Activated CD8-positive, alpha-beta T cell treated with anti-CD3 and anti-CD28 coated beads for 36 hours (primary cell): ENCODE measurements at regions of chr15 and their contacts with region 1.

Region 1: GRCh38 chr15:74768771-74769342 is 13.0 kb upstream of the CSK start:
- DNase-seq: peak; percentile 74
- ATAC-seq: peak; percentile 59
- H3K4me3 Mint-ChIP-seq: peak overlapping the region; percentile 19
- H3K27ac Mint-ChIP-seq: peak overlapping the region; percentile 44
- H3K4me1 Mint-ChIP-seq: peaks cover 24% of the 10 kb centered on the region
- H3K27me3 Mint-ChIP-seq: peaks cover 2% of the 10 kb centered on the region
- CTCF ChIP-seq: peak; percentile 85

Region 2: GRCh38 chr15:74373731-74374647 is 394.9 kb before region 1 on chr15:
- CTCF ChIA-PET with region 1: interaction called, 10 read pairs
- POLR2A ChIA-PET with region 1: interaction called, 4 read pairs
- intact Hi-C with region 1: no loop called
- DNase-seq: peak; percentile 97
- ATAC-seq: peak; percentile 90
- H3K4me3 Mint-ChIP-seq: peak overlapping the region; percentile 74
- H3K27ac Mint-ChIP-seq: peak overlapping the region; percentile 63
- H3K4me1 Mint-ChIP-seq: peaks cover 39% of the 10 kb centered on the region
- H3K27me3 Mint-ChIP-seq: peaks cover 6% of the 10 kb centered on the region
- CTCF ChIP-seq: peak; percentile 92

Region 3: DNA sequence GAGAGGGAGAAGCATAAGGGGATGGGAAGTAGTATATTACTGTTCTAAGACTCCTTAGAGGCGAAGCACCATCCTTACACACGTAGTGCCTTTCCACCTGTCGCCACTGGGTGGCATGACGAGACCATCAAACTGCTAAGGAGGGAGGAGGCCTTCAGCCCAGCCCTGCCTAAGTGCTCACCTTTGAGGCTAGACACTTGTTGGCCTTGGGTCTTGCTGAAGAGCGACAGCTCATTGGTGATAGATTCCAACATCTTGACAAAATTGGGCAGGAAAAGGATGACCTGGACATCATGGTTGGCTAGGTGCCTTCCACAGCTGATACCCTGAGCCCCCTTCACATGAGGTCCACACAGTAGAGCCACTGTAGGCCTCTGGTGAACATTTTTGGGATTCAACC is 133.6 kb before region 1 on chr15:
- CTCF ChIA-PET with region 1: interaction called, 576 read pairs
- POLR2A ChIA-PET with region 1: interaction called, 9 read pairs
- intact Hi-C with region 1: loop called (anchors 1 kb)
- DNase-seq: peak; percentile 84
- ATAC-seq: peak; percentile 94
- H3K4me3 Mint-ChIP-seq: no peak overlapping the region
- H3K27ac Mint-ChIP-seq: peak overlapping the region; percentile 39
- H3K4me1 Mint-ChIP-seq: no peaks in the 10 kb centered on the region
- H3K27me3 Mint-ChIP-seq: no peaks in the 10 kb centered on the region
- CTCF ChIP-seq: peak; percentile 89

Region 4: GRCh38 chr15:74682954-74683353 is 85.9 kb before region 1 on chr15:
- CTCF ChIA-PET with region 1: interaction called, 12 read pairs
- POLR2A ChIA-PET with region 1: no interaction called
- intact Hi-C with region 1: no loop called
- DNase-seq: no peak
- ATAC-seq: no peak
- H3K4me3 Mint-ChIP-seq: no peak overlapping the region
- H3K27ac Mint-ChIP-seq: no peak overlapping the region
- H3K4me1 Mint-ChIP-seq: peaks cover 4% of the 10 kb centered on the region
- H3K27me3 Mint-ChIP-seq: no peaks in the 10 kb centered on the region
- CTCF ChIP-seq: no peak

Region 5: DNA sequence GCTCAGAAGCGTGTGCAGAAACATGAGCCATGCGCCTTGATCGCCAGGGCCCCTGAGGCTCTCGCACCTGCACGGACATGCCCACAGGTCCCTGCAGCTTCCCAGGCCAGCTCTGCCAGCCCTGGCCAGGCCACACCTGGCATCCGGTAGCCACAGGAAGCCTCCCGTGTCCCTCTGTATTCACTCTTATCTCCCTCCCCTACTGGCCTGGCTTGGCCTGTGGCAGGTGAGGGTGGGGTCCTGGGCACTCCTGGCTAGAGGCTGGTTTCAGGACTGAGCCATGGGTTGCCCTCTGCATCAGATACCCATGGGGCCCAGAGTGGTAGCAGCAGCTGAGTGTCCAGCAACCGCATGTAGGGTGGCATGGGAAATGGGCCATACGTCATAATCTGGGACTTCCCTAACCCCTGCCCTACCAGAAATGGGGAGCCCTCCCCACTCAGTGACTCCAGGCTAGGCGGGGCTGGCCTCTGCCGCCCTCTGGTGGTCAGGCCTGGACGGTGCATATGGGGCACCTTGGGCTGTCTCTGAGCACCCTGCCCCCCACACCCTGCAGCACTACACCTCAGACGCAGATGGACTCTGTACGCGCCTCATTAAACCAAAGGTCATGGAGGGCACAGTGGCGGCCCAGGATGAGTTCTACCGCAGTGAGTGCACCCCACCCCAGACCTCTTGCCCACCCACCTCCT is 31.1 kb after region 1 on chr15:
- CTCF ChIA-PET with region 1: interaction called, 1,327 read pairs
- POLR2A ChIA-PET with region 1: interaction called, 410 read pairs
- intact Hi-C with region 1: loop called (anchors 2 kb)
- DNase-seq: peak; percentile 91
- ATAC-seq: peak; percentile 91
- H3K4me3 Mint-ChIP-seq: no peak overlapping the region
- H3K27ac Mint-ChIP-seq: peak overlapping the region; percentile 90
- H3K4me1 Mint-ChIP-seq: peaks cover 46% of the 10 kb centered on the region
- H3K27me3 Mint-ChIP-seq: no peaks in the 10 kb centered on the region
- CTCF ChIP-seq: peak; percentile 98

Region 6: DNA sequence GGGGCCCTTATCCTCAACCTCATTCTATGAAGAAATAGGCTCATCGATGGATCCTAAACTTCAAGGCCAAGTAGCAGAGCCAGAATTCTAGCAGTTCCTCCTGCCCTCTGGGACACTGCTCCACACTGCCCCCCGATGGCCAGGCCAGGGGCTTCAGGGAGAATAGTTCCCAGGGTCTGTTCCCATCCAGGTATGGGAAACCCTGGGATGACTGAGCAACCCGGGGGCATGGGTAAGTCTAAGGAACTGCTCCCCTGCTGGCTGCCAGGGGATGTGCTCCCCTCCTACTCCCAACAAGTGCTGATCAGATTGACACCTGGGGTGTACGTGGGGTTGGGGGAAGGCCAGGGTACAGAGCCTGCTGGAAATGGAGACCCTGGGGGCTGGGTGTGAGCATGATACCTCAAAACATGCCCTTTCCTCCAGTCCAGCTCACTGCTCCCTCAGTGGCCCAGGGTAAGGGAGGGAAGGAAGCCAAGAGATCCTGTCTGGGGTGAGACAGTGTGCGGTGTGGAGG is 66.5 kb after region 1 on chr15:
- CTCF ChIA-PET with region 1: interaction called, 16 read pairs
- POLR2A ChIA-PET with region 1: interaction called, 3 read pairs
- intact Hi-C with region 1: no loop called
- DNase-seq: peak; percentile 59
- ATAC-seq: peak; percentile 63
- H3K4me3 Mint-ChIP-seq: no peak overlapping the region
- H3K27ac Mint-ChIP-seq: no peak overlapping the region
- H3K4me1 Mint-ChIP-seq: no peaks in the 10 kb centered on the region
- H3K27me3 Mint-ChIP-seq: no peaks in the 10 kb centered on the region
- CTCF ChIP-seq: peak; percentile 86

Region 7: GRCh38 chr15:74906446-74907162 is 137.7 kb after region 1 on chr15 and contains the start of gene FAM219B:
- CTCF ChIA-PET with region 1: interaction called, 79 read pairs
- POLR2A ChIA-PET with region 1: interaction called, 8 read pairs
- intact Hi-C with region 1: no loop called
- DNase-seq: peak; percentile 88
- ATAC-seq: peak; percentile 89
- H3K4me3 Mint-ChIP-seq: peak within 1 kb of the TSS; percentile 88
- H3K27ac Mint-ChIP-seq: peak within 1 kb of the TSS; percentile 89
- H3K4me1 Mint-ChIP-seq: peaks cover 26% of the 10 kb centered on the region
- H3K27me3 Mint-ChIP-seq: no peaks in the 10 kb centered on the region
- CTCF ChIP-seq: no peak
- total RNA-seq, gene FAM219B: 36.5 to 44.7 TPM